ENCODE measurements at regions of chr3 and their contacts with region 1.

Region 1: DNA sequence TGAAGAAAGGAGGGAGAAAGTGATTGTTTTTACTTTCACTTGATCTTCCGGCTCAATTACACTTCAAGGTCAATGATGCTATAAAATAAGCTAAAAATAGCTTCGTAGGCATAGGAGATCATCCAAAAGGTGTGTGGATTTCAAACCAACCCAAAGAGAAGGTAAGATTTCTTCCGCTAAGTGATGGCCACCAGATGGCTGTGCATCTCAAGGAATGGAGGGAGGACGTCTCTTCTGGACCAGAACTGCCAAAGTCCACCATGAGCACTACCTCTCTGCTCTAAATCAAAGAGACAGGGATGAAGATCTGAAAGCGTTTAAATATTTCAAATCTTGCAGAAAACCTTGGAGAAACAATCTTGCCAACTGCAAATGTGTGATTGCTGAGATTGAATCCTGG is 199.1 kb upstream of the ZPLD1 start:
- DNase-seq: no peak
- H3K4me3 ChIP-seq: no peak overlapping the region
- H3K4me3 Mint-ChIP-seq: no peak overlapping the region
- H3K27ac ChIP-seq: no peak overlapping the region
- H3K27ac Mint-ChIP-seq: no peak overlapping the region
- H3K4me1 ChIP-seq: no peaks in the 10 kb centered on the region
- H3K4me1 Mint-ChIP-seq: no peaks in the 10 kb centered on the region
- H3K27me3 ChIP-seq: no peaks in the 10 kb centered on the region
- H3K27me3 Mint-ChIP-seq: peaks cover 1 to 3% (median 2%) of the 10 kb centered on the region in 3 donors
- CTCF ChIP-seq: no peak

Region 2: GRCh38 chr3:102529452-102529851 is 293.8 kb after region 1 on chr3:
- intact Hi-C with region 1: loop called in 1 of 2 experiments (anchors 10 kb)
- DNase-seq: no peak
- H3K4me3 ChIP-seq: no peak overlapping the region
- H3K4me3 Mint-ChIP-seq: no peak overlapping the region
- H3K27ac ChIP-seq: no peak overlapping the region
- H3K27ac Mint-ChIP-seq: peak overlapping the region in 1 of 7 donors; percentile 2
- H3K4me1 ChIP-seq: peaks cover 13 to 14% of the 10 kb centered on the region in 2 donors
- H3K4me1 Mint-ChIP-seq: peaks cover 23% of the 10 kb centered on the region
- H3K27me3 ChIP-seq: no peaks in the 10 kb centered on the region
- H3K27me3 Mint-ChIP-seq: no peaks in the 10 kb centered on the region
- CTCF ChIP-seq: no peak

Measured in CD14-positive monocyte (primary cell).